Esophagus muscularis mucosa (tissue), 4 donors: ENCODE measurements at regions of chr9 and their contacts with region 1.

Region 1: GRCh38 chr9:92790542-92791527 is 26.2 kb upstream of the BICD2 start:
- DNase-seq: peak; percentile 26
- H3K4me3 ChIP-seq: no peak overlapping the region
- H3K27ac ChIP-seq: no peak overlapping the region
- H3K4me1 ChIP-seq: peaks cover 0 to 8% (median 6%) of the 10 kb centered on the region in 4 donors
- H3K27me3 ChIP-seq: peaks cover 0 to 15% (median 0%) of the 10 kb centered on the region in 4 donors
- CTCF ChIP-seq: peak; percentile 80 to 90 (median 84)
- EP300 ChIP-seq: no peak
- POLR2A ChIP-seq: no peak

Region 2: DNA sequence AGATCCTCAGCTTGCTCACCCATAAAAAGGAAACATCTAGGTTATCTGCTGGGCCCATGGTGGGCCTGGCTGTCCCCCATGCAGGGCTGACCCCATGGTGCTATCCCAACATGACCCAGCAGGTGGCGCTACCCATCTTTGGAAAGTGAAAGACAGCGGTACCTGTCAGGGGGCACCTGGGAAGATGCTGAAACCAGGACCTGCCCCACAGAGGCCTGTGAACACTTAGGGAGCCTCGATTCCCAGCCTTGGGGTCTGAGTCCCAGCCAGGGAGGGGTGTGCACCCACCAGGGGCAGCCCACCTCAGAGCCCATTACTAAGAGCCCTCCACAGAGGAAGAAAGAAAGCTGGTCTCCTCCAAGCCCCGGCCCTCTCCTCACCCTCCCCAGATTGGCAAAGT is 74.3 kb before region 1 on chr9:
- intact Hi-C with region 1: loop called (anchors 1 kb)
- DNase-seq: peak; percentile 92
- H3K4me3 ChIP-seq: no peak overlapping the region
- H3K27ac ChIP-seq: no peak overlapping the region
- H3K4me1 ChIP-seq: peaks cover 6 to 21% (median 10%) of the 10 kb centered on the region in 4 donors
- H3K27me3 ChIP-seq: no peaks in the 10 kb centered on the region
- CTCF ChIP-seq: peak; percentile 84 to 95 (median 94)
- EP300 ChIP-seq: no peak
- POLR2A ChIP-seq: no peak

Region 3: GRCh38 chr9:92764988-92765936 is 25.6 kb before region 1 on chr9:
- intact Hi-C with region 1: loop called (anchors 2 kb)
- DNase-seq: peak; percentile 99
- H3K4me3 ChIP-seq: peak overlapping the region; percentile 82 to 100 (median 98)
- H3K27ac ChIP-seq: peak overlapping the region; percentile 98 to 100 (median 100)
- H3K4me1 ChIP-seq: peaks cover 45 to 52% (median 48%) of the 10 kb centered on the region in 4 donors
- H3K27me3 ChIP-seq: no peaks in the 10 kb centered on the region
- CTCF ChIP-seq: peak; percentile 89 to 94 (median 90)
- EP300 ChIP-seq: no peak
- POLR2A ChIP-seq: peak; percentile 92

Region 4: DNA sequence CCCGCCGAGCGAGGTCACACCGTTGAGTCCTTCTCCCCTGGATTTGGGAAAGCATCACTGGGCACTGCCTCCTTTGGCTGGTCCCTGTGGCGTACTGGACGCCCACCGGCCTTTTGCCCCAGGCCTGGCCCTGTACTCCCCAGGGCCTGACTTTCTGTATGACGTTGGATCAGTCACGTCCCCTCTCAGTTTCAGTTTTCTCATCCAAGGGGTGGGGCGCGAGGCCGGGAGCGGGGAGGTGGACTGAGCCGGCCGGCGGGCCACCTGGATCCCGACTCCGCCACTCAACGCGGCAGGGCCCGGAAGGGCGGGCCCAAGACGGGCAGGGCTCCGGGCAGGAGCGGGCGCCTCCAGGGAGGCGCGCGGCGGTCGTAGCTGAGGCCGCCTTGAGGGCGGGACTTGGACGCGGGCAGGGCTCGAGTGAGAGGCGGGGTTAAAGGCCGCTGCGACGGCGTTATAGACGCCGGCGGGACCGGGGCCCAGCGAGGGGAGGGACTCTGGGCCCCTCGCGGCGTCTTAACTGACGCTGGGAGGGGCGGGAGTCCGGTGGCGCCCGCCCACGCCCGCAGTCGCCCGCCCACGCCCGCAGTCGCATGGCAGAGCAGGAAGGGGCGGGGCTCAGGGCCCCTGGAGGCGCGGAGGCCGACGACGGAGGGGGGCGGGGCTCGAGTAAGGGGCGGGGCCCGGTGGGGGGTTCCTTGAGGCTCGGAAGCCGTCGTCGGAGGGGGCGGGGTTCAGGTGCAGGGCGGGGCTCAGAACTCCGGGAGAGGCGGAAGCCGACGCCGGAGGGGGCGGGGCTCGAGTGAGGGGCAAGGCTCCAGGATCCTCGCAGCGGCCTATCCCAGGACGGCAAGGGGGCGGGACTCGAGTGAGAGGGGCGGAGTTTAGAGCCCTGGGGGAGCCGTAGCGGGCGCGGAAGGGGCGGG is 304.6 kb after region 1 on chr9:
- intact Hi-C with region 1: no loop called
- DNase-seq: peak; percentile 100
- H3K4me3 ChIP-seq: peak overlapping the region; percentile 70 to 99 (median 78)
- H3K27ac ChIP-seq: peak overlapping the region; percentile 91 to 99 (median 94)
- H3K4me1 ChIP-seq: peaks cover 52 to 64% (median 61%) of the 10 kb centered on the region in 4 donors
- H3K27me3 ChIP-seq: no peaks in the 10 kb centered on the region
- CTCF ChIP-seq: no peak
- EP300 ChIP-seq: no peak
- POLR2A ChIP-seq: peak; percentile 85